ENCODE measurements at regions of chr15 and their contacts with region 1.

Region 1: GRCh38 chr15:57340682-57341259 is 35.5 kb upstream of the CGNL1 start:
- DNase-seq: peak in 1 of 3 donors; percentile 62
- ATAC-seq: peak; percentile 79 to 91 (median 87)
- H3K4me3 ChIP-seq: no peak overlapping the region
- H3K27ac ChIP-seq: no peak overlapping the region
- H3K4me1 ChIP-seq: no peaks in the 10 kb centered on the region
- H3K27me3 ChIP-seq: no peaks in the 10 kb centered on the region
- CTCF ChIP-seq: peak; percentile 83 to 91 (median 88)
- POLR2A ChIP-seq: no peak

Region 2: GRCh38 chr15:56969265-56969895 is 371.4 kb before region 1 on chr15:
- intact Hi-C with region 1: no loop called
- DNase-seq: no peak
- ATAC-seq: peak in 1 of 4 donors; percentile 41
- H3K4me3 ChIP-seq: no peak overlapping the region
- H3K27ac ChIP-seq: no peak overlapping the region
- H3K4me1 ChIP-seq: peaks cover 0 to 11% (median 2%) of the 10 kb centered on the region in 4 donors
- H3K27me3 ChIP-seq: no peaks in the 10 kb centered on the region
- CTCF ChIP-seq: no peak
- POLR2A ChIP-seq: no peak

Region 3: DNA sequence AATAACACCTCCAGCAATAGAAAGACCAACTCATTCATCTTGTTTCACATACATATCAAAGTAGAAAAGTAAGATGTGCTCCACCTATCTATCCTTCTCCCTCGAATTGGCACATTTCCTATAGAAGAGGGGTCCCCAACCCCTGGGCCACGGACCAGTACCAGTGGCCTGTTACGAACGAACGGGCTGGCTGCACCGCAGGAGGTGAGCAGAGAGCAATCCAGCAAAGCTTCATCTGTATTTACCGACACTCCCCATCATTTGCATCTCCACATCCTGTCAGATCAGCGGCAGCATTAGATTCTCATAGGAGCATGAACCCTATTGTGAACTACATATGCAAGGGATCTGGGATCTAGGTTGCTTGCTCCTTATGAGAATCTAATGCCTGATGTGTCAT is 59.5 kb before region 1 on chr15:
- intact Hi-C with region 1: no loop called
- DNase-seq: no peak
- ATAC-seq: no peak
- H3K4me3 ChIP-seq: no peak overlapping the region
- H3K27ac ChIP-seq: no peak overlapping the region
- H3K4me1 ChIP-seq: no peaks in the 10 kb centered on the region
- H3K27me3 ChIP-seq: no peaks in the 10 kb centered on the region
- CTCF ChIP-seq: no peak
- POLR2A ChIP-seq: no peak

Region 4: DNA sequence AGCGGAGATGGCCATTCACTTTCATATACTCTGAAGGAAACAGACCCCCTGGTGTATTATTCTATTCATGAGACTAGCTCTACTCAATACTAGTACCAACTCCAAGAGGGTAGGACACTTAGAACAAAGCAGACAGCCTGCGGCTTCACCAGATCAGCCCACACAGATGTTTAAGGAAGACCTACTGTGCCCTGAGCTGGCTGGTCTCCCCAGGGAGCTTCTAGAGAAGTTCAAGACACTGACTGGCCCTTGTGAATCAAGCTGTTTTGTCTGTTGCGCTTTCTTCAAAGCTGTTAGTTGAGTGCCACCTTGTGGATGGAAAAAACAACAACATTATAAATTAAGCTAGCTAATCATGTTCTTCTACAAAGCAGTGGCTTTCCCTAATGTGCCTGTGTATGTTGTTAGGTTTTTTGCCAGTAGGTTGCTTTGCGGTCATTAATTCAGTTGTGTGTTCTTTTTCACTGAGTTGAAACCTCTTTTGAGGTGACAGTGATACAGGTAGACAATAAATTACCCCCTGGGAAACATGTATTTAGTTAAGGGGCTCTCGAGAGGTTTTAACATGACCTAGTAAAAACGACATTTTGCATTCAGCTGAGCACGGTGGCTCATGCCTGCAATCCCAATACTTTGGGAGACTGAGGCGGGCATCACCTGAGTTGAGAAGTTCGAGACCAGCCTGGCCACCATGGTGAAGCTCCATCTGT is 186.8 kb after region 1 on chr15:
- intact Hi-C with region 1: loop called (anchors 10 kb)
- DNase-seq: no peak
- ATAC-seq: peak; percentile 69 to 81 (median 78)
- H3K4me3 ChIP-seq: no peak overlapping the region
- H3K27ac ChIP-seq: no peak overlapping the region
- H3K4me1 ChIP-seq: peaks cover 0 to 8% (median 0%) of the 10 kb centered on the region in 4 donors
- H3K27me3 ChIP-seq: no peaks in the 10 kb centered on the region
- CTCF ChIP-seq: peak; percentile 54 to 69 (median 58)
- POLR2A ChIP-seq: no peak

Region 5: GRCh38 chr15:57537072-57537471 is 196.3 kb after region 1 on chr15:
- intact Hi-C with region 1: loop called in 1 of 2 experiments (anchors 10 kb)
- DNase-seq: no peak
- ATAC-seq: peak in 1 of 4 donors; percentile 52
- H3K4me3 ChIP-seq: no peak overlapping the region
- H3K27ac ChIP-seq: no peak overlapping the region
- H3K4me1 ChIP-seq: no peaks in the 10 kb centered on the region
- H3K27me3 ChIP-seq: no peaks in the 10 kb centered on the region
- CTCF ChIP-seq: no peak
- POLR2A ChIP-seq: no peak

Measured in right lobe of liver (tissue), 6 donors.